GM12878 (cell line): ENCODE measurements at regions of chr9 and their contacts with region 1.

Region 1: DNA sequence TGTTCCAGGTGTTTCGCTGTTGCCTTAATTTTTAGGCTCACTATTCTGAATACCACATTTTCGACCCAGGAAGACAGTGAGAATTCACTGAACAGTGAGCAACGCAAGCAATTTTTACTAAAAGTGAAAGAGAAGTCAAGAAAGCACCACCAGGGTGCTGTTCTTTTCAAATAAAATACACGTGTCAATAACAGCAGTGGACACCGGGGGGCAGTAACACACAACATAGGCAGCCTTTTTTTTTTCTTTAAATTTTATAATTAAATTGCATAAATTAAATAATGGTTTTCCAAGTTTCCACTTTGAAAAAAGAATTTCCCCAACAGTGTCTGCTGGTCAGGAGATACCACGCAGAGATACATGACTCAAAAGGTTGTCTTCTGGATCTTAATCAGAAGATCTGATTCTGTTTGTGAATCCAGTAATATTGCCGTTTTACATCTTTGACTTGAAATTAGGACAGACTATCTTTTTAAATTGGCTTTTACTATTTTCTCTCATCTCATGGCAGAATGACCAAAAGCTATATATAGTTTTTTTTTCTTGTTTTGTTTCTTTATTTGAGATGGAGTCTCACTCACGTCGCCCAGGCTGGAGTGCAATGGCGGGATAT is 47.1 kb upstream of the SH3GL2 start:
- DNase-seq: no peak
- ATAC-seq: peak; percentile 89
- H3K4me3 ChIP-seq: no peak overlapping the region; the same call in 1 of the 2 replicates
- H3K27ac ChIP-seq: no peak overlapping the region
- H3K4me1 ChIP-seq: no peaks in the 10 kb centered on the region
- H3K27me3 ChIP-seq: no peaks in the 10 kb centered on the region; a peak in 1 of 4 replicates
- CTCF ChIP-seq: peak; percentile 47 to 59 (median 53); a peak in 5 of 6 replicates
- EP300 ChIP-seq: no peak
- POLR2A ChIP-seq: no peak
- RAD21 ChIP-seq: peak; percentile 57

Region 2: DNA sequence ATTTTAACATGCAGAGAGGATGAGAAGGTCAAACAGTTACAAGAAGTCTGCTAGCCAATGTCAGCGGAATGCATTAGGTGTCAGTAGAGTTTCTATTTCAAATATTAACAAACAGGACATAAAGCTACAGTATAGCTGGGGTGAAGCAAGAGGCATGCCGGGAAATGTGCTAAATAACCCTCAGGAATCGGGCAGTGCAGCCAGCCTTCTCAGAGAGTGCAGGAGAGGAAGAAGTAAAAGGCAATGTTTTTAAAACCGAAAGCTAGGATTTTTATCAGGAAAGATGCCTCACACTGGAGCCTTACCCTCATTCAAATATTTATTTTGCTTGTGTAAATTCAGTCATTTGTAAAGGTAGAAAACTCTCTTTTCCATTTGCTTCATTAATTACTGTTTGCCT is 12.0 kb before region 1 on chr9:
- CTCF ChIA-PET with region 1: interaction called, 12 read pairs
- POLR2A ChIA-PET with region 1: no interaction called
- RAD21 ChIA-PET with region 1: interaction called, 3 read pairs
- SMC1A ChIA-PET with region 1: interaction called, 8 read pairs
- in situ Hi-C with region 1: no loop called
- intact Hi-C with region 1: no loop called
- DNase-seq: no peak
- ATAC-seq: no peak
- H3K4me3 ChIP-seq: no peak overlapping the region
- H3K27ac ChIP-seq: no peak overlapping the region
- H3K4me1 ChIP-seq: no peaks in the 10 kb centered on the region
- H3K27me3 ChIP-seq: no peaks in the 10 kb centered on the region
- CTCF ChIP-seq: no peak
- EP300 ChIP-seq: no peak
- POLR2A ChIP-seq: no peak
- RAD21 ChIP-seq: no peak

Region 3: DNA sequence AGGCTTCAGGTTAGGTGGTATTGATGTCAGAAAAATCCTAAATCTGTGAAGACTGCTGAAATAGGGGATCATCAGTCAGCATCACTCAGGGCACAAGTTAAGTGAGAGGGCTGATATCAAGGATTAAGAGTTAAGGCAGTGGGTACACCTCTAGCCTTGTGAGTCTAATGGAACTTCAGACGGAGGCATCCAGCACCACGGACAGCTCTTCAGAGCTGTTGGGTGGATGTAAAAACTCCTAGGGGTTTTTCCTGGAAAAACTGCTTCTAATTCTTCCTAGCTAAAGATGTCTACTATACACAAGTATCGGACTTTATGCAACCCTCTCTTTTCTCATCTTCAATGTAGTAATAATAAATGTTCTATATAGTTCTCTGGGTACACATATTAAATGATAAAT is 213.0 kb after region 1 on chr9:
- CTCF ChIA-PET with region 1: no interaction called
- POLR2A ChIA-PET with region 1: no interaction called
- RAD21 ChIA-PET with region 1: no interaction called
- SMC1A ChIA-PET with region 1: no interaction called
- in situ Hi-C with region 1: no loop called
- intact Hi-C with region 1: no loop called
- DNase-seq: no peak
- ATAC-seq: no peak
- H3K4me3 ChIP-seq: no peak overlapping the region
- H3K27ac ChIP-seq: no peak overlapping the region
- H3K4me1 ChIP-seq: no peaks in the 10 kb centered on the region
- H3K27me3 ChIP-seq: no peaks in the 10 kb centered on the region
- CTCF ChIP-seq: no peak
- EP300 ChIP-seq: no peak
- POLR2A ChIP-seq: no peak
- RAD21 ChIP-seq: no peak

Region 4: DNA sequence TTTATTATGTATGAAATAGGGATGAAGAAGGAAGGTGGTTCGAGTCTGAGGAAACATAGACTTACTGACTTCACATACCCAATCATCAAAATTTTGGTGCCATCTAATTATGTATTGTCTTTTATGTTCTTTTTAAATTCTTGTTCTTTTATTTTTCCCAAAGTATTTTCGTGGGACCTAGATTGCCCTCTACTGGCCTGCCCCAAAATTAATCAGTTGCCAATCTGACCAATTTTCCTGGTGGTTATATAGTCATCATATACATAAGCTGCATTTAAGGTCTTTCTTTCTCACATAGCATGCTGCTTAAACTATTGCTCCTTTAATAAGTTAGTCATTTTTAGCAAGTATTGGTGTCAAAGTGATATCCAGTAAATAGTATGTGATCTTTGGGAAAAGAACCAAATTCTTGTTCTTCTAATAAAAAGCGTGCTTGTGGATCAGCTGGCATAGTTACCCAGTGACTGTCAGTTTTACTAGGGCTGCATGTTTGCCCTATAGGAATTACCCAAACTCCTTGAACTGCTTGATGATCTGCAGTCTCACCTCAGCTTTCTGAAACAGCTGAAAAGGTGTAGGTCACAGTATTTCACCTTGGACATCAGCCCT is 270.6 kb after region 1 on chr9:
- CTCF ChIA-PET with region 1: interaction called, 24 read pairs
- POLR2A ChIA-PET with region 1: no interaction called
- RAD21 ChIA-PET with region 1: no interaction called
- SMC1A ChIA-PET with region 1: interaction called, 3 read pairs
- in situ Hi-C with region 1: loop called (anchors 10 kb)
- intact Hi-C with region 1: loop called (anchors 1 kb)
- DNase-seq: no peak
- ATAC-seq: no peak
- H3K4me3 ChIP-seq: no peak overlapping the region
- H3K27ac ChIP-seq: no peak overlapping the region
- H3K4me1 ChIP-seq: no peaks in the 10 kb centered on the region
- H3K27me3 ChIP-seq: no peaks in the 10 kb centered on the region
- CTCF ChIP-seq: peak in 2 of 3 experiments; percentile 36 to 40; a peak in 5 of 6 replicates
- EP300 ChIP-seq: no peak
- POLR2A ChIP-seq: no peak
- RAD21 ChIP-seq: peak; percentile 38

Region 5: GRCh38 chr9:18060245-18060934 is 528.6 kb after region 1 on chr9:
- CTCF ChIA-PET with region 1: no interaction called
- POLR2A ChIA-PET with region 1: no interaction called
- RAD21 ChIA-PET with region 1: no interaction called
- SMC1A ChIA-PET with region 1: no interaction called
- in situ Hi-C with region 1: no loop called
- intact Hi-C with region 1: loop called (anchors 10 kb)
- DNase-seq: no peak
- ATAC-seq: no peak
- H3K4me3 ChIP-seq: no peak overlapping the region
- H3K27ac ChIP-seq: no peak overlapping the region
- H3K4me1 ChIP-seq: no peaks in the 10 kb centered on the region
- H3K27me3 ChIP-seq: peaks cover 0 to 1% of the 10 kb centered on the region in 2 experiments; a peak in 1 of 4 replicates
- CTCF ChIP-seq: peak in 2 of 3 experiments; percentile 21 to 32; a peak in 3 of 6 replicates
- EP300 ChIP-seq: no peak
- POLR2A ChIP-seq: no peak
- RAD21 ChIP-seq: no peak

Region 6: GRCh38 chr9:18208154-18209059 is 676.7 kb after region 1 on chr9:
- CTCF ChIA-PET with region 1: interaction called, 14 read pairs
- POLR2A ChIA-PET with region 1: no interaction called
- RAD21 ChIA-PET with region 1: interaction called, 6 read pairs
- SMC1A ChIA-PET with region 1: interaction called, 4 read pairs
- in situ Hi-C with region 1: loop called (anchors 10 kb)
- intact Hi-C with region 1: loop called (anchors 2 kb)
- DNase-seq: no peak
- ATAC-seq: no peak
- H3K4me3 ChIP-seq: no peak overlapping the region
- H3K27ac ChIP-seq: no peak overlapping the region
- H3K4me1 ChIP-seq: no peaks in the 10 kb centered on the region
- H3K27me3 ChIP-seq: no peaks in the 10 kb centered on the region
- CTCF ChIP-seq: peak; percentile 12 to 42 (median 36); a peak in 3 of 6 replicates
- EP300 ChIP-seq: no peak
- POLR2A ChIP-seq: no peak
- RAD21 ChIP-seq: peak; percentile 31; the same call in 1 of the 2 replicates